OCI-LY7 (cell line): ENCODE measurements at regions of chr2 and their contacts with region 1.

Region 1: DNA sequence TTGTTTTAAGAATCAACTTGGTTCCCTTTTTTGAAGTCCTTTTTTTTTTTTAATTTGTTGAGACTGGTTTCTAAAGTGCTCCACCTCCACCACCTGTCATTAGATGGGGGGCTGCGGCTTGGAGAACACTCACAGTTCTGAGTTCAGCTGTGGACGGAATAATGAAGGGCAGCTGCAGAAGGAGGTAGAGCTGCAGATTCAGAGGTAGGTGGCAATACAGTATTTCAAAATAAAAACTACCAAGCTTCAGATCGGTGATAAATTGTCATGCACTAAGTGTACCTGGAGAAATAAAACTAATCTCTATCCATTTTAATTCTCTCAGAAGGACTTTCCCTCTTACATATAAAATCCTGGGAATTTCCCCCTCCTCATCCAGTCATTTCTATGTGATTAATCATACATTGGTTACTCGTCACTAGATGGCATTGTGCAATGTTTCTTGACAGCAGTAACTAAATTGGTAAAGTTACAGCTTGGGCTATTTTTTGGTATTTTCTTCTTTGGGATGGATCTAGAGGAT is 81.1 kb upstream of the SLC39A10 start:
- DNase-seq: peak; percentile 80
- H3K4me3 ChIP-seq: peak overlapping the region; percentile 17
- H3K27ac ChIP-seq: peak overlapping the region; percentile 37
- H3K4me1 ChIP-seq: peaks cover 39% of the 10 kb centered on the region
- CTCF ChIP-seq: peak; percentile 90

Region 2: GRCh38 chr2:194946826-194947225 is 629.1 kb before region 1 on chr2:
- CTCF ChIA-PET with region 1: no interaction called
- POLR2A ChIA-PET with region 1: no interaction called
- intact Hi-C with region 1: no loop called
- DNase-seq: no peak
- H3K4me3 ChIP-seq: no peak overlapping the region
- H3K27ac ChIP-seq: no peak overlapping the region
- H3K4me1 ChIP-seq: no peaks in the 10 kb centered on the region
- CTCF ChIP-seq: no peak

Region 3: GRCh38 chr2:195238379-195238778 is 337.6 kb before region 1 on chr2:
- CTCF ChIA-PET with region 1: no interaction called
- POLR2A ChIA-PET with region 1: no interaction called
- intact Hi-C with region 1: no loop called
- DNase-seq: no peak
- H3K4me3 ChIP-seq: no peak overlapping the region
- H3K27ac ChIP-seq: no peak overlapping the region
- H3K4me1 ChIP-seq: no peaks in the 10 kb centered on the region
- CTCF ChIP-seq: no peak

Region 4: DNA sequence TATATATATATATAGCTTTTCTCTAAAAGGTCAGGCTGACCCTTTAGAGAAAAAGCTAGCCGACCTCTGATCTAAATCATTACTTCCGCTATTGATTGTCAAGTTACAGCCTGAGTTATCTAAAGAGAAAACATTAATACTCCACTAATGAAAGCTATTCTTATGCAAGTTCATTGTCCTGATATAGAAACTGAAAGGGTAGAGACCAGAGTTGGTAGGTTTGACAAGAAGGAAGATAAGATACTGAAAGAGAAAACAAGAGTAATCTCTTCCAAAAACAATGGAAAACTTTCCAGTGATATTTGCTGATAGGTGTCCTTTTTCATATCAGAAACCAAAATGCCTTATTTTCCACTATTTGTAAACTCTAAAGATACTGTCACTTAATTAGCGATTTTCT is 18.3 kb after region 1 on chr2:
- CTCF ChIA-PET with region 1: no interaction called
- POLR2A ChIA-PET with region 1: interaction called, 18 read pairs
- intact Hi-C with region 1: no loop called
- DNase-seq: no peak
- H3K4me3 ChIP-seq: no peak overlapping the region
- H3K27ac ChIP-seq: no peak overlapping the region
- H3K4me1 ChIP-seq: no peaks in the 10 kb centered on the region
- CTCF ChIP-seq: no peak

Region 5: DNA sequence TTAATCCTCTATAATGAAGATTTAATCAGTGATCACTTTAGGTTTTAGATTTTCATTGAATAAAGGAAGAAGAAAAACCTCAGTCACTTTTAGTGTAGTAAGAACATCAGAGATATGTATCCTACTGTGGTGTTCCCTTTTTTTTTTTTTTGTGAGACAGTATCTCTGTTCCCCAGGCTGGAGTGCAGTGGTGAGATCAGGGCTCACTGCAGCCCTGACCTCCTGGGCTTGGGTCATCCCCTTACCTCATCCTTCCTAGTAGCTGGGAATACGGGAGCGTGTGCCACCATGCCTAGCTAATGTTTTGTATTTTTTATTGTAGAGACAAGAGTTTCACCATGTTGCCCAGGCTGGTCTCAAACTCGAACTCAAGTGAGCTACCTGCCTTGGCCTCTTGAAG is 86.2 kb after region 1 on chr2:
- CTCF ChIA-PET with region 1: interaction called, 20 read pairs
- POLR2A ChIA-PET with region 1: interaction called, 14 read pairs
- intact Hi-C with region 1: loop called (anchors 1 kb)
- DNase-seq: no peak
- H3K4me3 ChIP-seq: no peak overlapping the region
- H3K27ac ChIP-seq: no peak overlapping the region
- H3K4me1 ChIP-seq: peaks cover 24% of the 10 kb centered on the region
- CTCF ChIP-seq: no peak